Activated CD4-positive, alpha-beta memory T cell treated with anti-CD3 and anti-CD28 coated beads for 36 hours (primary cell): ENCODE measurements at regions of chr13 and their contacts with region 1.

Region 1: DNA sequence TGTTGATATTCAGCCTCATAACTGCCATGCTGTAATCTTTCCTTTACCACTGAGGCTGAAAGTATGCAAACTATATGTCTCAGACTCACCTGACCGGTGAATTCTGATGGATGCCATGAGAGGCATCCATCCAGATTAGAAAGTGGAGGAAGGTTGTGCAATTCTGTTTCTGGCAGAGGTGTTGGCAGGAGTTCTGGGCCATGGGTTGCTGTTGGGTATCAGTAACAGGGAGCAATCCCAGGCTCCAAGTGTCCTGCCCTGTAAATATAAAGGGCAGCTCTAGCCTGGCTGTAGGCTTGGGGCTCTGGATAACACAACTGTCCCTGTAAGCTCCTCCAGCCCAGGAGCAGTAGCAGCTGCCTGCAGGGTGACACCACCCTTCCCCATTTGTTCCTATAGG is 77.4 kb upstream of the ABCC4 start:
- DNase-seq: no peak
- H3K4me3 Mint-ChIP-seq: no peak overlapping the region
- H3K27ac Mint-ChIP-seq: no peak overlapping the region
- H3K4me1 Mint-ChIP-seq: peaks cover 6% of the 10 kb centered on the region
- H3K27me3 Mint-ChIP-seq: peaks cover 3% of the 10 kb centered on the region

Region 2: GRCh38 chr13:94679614-94680013 is 699.0 kb before region 1 on chr13:
- CTCF ChIA-PET with region 1: no interaction called
- POLR2A ChIA-PET with region 1: no interaction called
- intact Hi-C with region 1: no loop called
- DNase-seq: no peak
- H3K4me3 Mint-ChIP-seq: no peak overlapping the region
- H3K27ac Mint-ChIP-seq: no peak overlapping the region
- H3K4me1 Mint-ChIP-seq: no peaks in the 10 kb centered on the region
- H3K27me3 Mint-ChIP-seq: peaks cover 35% of the 10 kb centered on the region

Region 3: GRCh38 chr13:95301183-95301967 is 77.2 kb before region 1 on chr13 and contains the start of gene ABCC4:
- CTCF ChIA-PET with region 1: interaction called, 47 read pairs
- POLR2A ChIA-PET with region 1: no interaction called
- intact Hi-C with region 1: loop called (anchors 1 kb)
- DNase-seq: peak; percentile 67
- H3K4me3 Mint-ChIP-seq: peak within 1 kb of the TSS; percentile 75
- H3K27ac Mint-ChIP-seq: peak within 1 kb of the TSS; percentile 5
- H3K4me1 Mint-ChIP-seq: peaks cover 32% of the 10 kb centered on the region
- H3K27me3 Mint-ChIP-seq: no peaks in the 10 kb centered on the region
- total RNA-seq, gene ABCC4: 6.9 to 8.7 TPM

Region 4: GRCh38 chr13:95317039-95317989 is 61.3 kb before region 1 on chr13:
- CTCF ChIA-PET with region 1: interaction called, 10 read pairs
- POLR2A ChIA-PET with region 1: no interaction called
- intact Hi-C with region 1: no loop called
- DNase-seq: no peak
- H3K4me3 Mint-ChIP-seq: no peak overlapping the region
- H3K27ac Mint-ChIP-seq: no peak overlapping the region
- H3K4me1 Mint-ChIP-seq: no peaks in the 10 kb centered on the region
- H3K27me3 Mint-ChIP-seq: peaks cover under 1% of the 10 kb centered on the region